HepG2 (cell line): ENCODE measurements at regions of chr4 and their contacts with region 1.

Region 1: DNA sequence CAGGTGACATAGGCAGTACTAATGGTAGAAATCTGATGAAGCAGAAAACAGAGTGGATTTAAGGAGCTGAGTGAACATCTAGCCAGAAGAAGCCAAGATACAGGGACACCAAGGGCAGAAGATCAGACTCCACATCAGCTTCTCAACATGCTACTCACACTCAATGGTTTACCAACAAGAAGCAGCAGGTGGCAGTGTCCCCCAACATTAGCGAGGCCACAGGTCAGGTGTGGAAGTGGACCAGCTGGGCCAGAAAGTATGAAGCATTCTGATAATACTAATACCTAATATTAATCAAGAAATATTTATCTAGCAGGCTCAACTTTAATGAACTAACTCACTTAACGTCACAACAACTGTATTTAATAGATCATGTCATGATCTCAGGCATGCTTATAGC is 73.4 kb upstream of the TTC29 start:
- DNase-seq: peak; percentile 47
- ATAC-seq: peak; percentile 94
- H3K4me3 ChIP-seq: no peak overlapping the region
- H3K27ac ChIP-seq: no peak overlapping the region
- H3K4me1 ChIP-seq: no peaks in the 10 kb centered on the region
- H3K27me3 ChIP-seq: no peaks in the 10 kb centered on the region
- CTCF ChIP-seq: peak; percentile 80
- EP300 ChIP-seq: no peak
- POLR2A ChIP-seq: no peak
- RAD21 ChIP-seq: peak; percentile 69; the same call in 1 of the 2 replicates

Region 2: GRCh38 chr4:147096667-147097604 is 77.9 kb after region 1 on chr4:
- CTCF ChIA-PET with region 1: interaction called, 26 read pairs
- POLR2A ChIA-PET with region 1: no interaction called
- in situ Hi-C with region 1: loop called (anchors 5 kb)
- intact Hi-C with region 1: loop called (anchors 1 kb)
- DNase-seq: peak; percentile 34
- ATAC-seq: peak; percentile 41; the same call in 1 of the 3 replicates
- H3K4me3 ChIP-seq: no peak overlapping the region
- H3K27ac ChIP-seq: no peak overlapping the region
- H3K4me1 ChIP-seq: no peaks in the 10 kb centered on the region
- H3K27me3 ChIP-seq: no peaks in the 10 kb centered on the region
- CTCF ChIP-seq: peak; percentile 66
- EP300 ChIP-seq: no peak
- POLR2A ChIP-seq: no peak
- RAD21 ChIP-seq: no peak